ENCODE measurements at regions of chr10 and their contacts with region 1.

Region 1: DNA sequence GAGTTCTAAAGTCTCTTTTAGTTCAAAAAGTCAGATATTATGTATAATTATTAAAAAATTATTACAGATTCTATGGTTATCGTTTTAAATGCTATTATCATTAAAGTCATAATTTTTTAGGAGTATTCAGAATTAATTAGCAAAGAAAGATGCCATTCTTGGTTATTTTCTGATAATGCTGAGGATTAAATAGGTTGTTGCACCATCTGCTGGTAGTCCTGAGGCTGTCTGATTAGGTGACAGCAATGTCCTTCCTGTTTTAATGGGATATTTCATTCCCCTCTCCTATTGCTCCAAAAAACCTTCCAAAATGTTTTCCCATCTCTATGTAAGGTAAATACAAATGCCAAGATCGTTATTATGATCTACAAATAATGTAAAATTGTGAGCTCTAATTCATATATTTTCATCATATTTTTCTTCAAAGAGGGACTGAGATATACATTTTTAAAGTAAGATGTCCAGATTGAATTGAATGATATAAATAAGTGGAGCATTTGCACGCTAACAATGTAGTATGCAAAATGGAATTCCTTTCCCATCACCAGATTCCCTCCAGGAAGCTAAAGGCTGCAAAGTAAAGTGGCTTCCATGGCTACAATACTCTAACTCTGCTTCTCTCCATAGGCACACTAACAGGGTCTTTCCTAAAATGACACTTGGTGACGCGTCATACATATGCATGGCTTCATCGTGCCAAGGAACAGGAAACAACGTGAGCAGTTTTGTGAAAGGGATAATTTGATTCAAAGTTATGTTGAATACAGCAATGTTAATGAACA is 58.8 kb upstream of the AKR1E2 start:
- DNase-seq: peak; percentile 27
- ATAC-seq: no peak
- H3K4me3 ChIP-seq: no peak overlapping the region
- H3K4me3 Mint-ChIP-seq: no peak overlapping the region
- H3K27ac ChIP-seq: no peak overlapping the region
- H3K27ac Mint-ChIP-seq: no peak overlapping the region
- H3K4me1 ChIP-seq: no peaks in the 10 kb centered on the region
- H3K4me1 Mint-ChIP-seq: no peaks in the 10 kb centered on the region
- H3K27me3 ChIP-seq: peaks cover 0 to 7% (median under 1%) of the 10 kb centered on the region in 4 experiments
- H3K27me3 Mint-ChIP-seq: peaks cover 8% of the 10 kb centered on the region
- CTCF ChIP-seq: peak; percentile 72

Region 2: DNA sequence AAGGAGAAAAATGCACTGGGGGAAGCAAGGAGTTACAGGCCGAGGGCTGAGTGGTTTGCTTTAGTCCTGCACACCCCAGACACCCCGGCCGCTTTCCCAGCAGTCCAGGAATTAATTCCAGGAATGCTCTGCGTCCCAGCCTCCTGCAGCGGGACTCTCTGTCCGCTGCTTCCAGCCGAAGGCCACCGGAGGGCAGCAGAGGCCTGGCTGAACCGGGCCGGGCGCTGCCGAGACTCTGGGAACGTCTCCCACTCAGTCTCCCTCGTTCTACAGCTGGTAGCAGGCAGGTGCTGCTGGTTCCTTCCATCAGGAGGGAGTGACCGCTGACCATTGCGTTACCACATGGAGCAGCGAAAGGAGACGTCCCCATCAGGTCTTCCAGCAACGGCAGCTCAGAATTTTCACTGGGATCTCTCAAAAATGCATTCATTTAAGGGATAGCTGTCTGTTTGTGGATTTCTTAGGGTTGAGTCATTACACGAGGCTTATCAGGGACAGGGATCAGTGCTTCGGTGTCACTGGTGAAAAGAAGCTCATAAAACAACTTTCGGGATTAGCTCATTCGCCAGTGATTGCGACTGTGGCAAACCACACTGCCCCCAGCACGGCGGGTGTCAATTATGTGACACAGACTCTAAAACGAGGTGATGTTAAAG is 1569.7 kb before region 1 on chr10:
- CTCF ChIA-PET with region 1: interaction called, 136 read pairs
- POLR2A ChIA-PET with region 1: no interaction called
- intact Hi-C with region 1: loop called (anchors 1 kb)
- DNase-seq: peak; percentile 41
- ATAC-seq: peak; percentile 36
- H3K4me3 ChIP-seq: no peak overlapping the region
- H3K4me3 Mint-ChIP-seq: peak overlapping the region; percentile 2
- H3K27ac ChIP-seq: no peak overlapping the region
- H3K27ac Mint-ChIP-seq: no peak overlapping the region
- H3K4me1 ChIP-seq: peaks cover 7% of the 10 kb centered on the region in 2 donors
- H3K4me1 Mint-ChIP-seq: peaks cover 10% of the 10 kb centered on the region
- H3K27me3 ChIP-seq: peaks cover 0 to 51% (median 10%) of the 10 kb centered on the region in 4 experiments
- H3K27me3 Mint-ChIP-seq: peaks cover 48% of the 10 kb centered on the region
- CTCF ChIP-seq: peak; percentile 51

Region 3: GRCh38 chr10:3239066-3239919 is 1527.9 kb before region 1 on chr10:
- CTCF ChIA-PET with region 1: interaction called, 40 read pairs
- POLR2A ChIA-PET with region 1: no interaction called
- intact Hi-C with region 1: loop called (anchors 1 kb)
- DNase-seq: peak; percentile 76
- ATAC-seq: peak; percentile 78
- H3K4me3 ChIP-seq: no peak overlapping the region
- H3K4me3 Mint-ChIP-seq: no peak overlapping the region
- H3K27ac ChIP-seq: no peak overlapping the region
- H3K27ac Mint-ChIP-seq: no peak overlapping the region
- H3K4me1 ChIP-seq: peaks cover 0 to 5% of the 10 kb centered on the region in 2 donors
- H3K4me1 Mint-ChIP-seq: peaks cover 5% of the 10 kb centered on the region
- H3K27me3 ChIP-seq: peaks cover 0 to 12% (median 4%) of the 10 kb centered on the region in 4 experiments
- H3K27me3 Mint-ChIP-seq: peaks cover 9% of the 10 kb centered on the region
- CTCF ChIP-seq: peak; percentile 95